Activated CD4-positive, alpha-beta T cell treated with anti-CD3 and anti-CD28 coated beads, Interleukin-2, amount 10 ng/mL, durations not matched to agents 24 days and 14 days (primary cell): ENCODE measurements at regions of chr6 and their contacts with region 1.

Region 1: GRCh38 chr6:166627033-166627874 is at the start of gene RPS6KA2:
- DNase-seq: peak; percentile 100
- H3K4me3 Mint-ChIP-seq: peak within 1 kb of the TSS; percentile 91
- H3K27ac Mint-ChIP-seq: peak within 1 kb of the TSS; percentile 83
- H3K4me1 Mint-ChIP-seq: peaks cover 17% of the 10 kb centered on the region
- H3K27me3 Mint-ChIP-seq: peaks cover 46% of the 10 kb centered on the region
- total RNA-seq, gene RPS6KA2: 2.8 and 3.1 TPM in 2 replicates

Region 2: GRCh38 chr6:166342349-166343149 is 284.7 kb before region 1 on chr6 and contains the start of gene SFT2D1:
- intact Hi-C with region 1: no loop called
- DNase-seq: peak; percentile 96
- H3K4me3 Mint-ChIP-seq: peak within 1 kb of the TSS; percentile 99
- H3K27ac Mint-ChIP-seq: peak within 1 kb of the TSS; percentile 93
- H3K4me1 Mint-ChIP-seq: peaks cover 8% of the 10 kb centered on the region
- H3K27me3 Mint-ChIP-seq: peaks cover 4% of the 10 kb centered on the region
- total RNA-seq, gene SFT2D1: 56.9 and 61.2 TPM in 2 replicates

Region 3: DNA sequence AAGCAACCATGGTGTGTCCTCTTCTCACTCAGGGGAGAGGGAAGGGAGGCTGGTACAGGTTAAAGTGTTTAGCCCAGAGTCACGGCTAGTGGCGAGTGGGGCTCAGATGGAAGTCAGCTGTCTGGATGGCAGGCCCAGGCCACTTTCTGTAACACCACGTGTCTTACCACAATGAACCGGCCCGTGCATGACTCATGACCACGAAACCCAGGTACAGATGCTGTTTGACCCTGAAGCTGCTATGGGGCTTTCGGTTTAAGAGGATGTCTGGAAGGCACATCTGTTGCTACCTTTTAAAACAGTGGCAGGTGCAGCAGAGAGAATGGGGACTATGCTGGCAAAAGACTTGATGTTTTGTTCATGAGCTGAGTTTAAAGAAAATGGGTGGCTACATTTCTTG is 208.0 kb before region 1 on chr6:
- intact Hi-C with region 1: loop called (anchors 5 kb)
- DNase-seq: peak; percentile 86
- H3K4me3 Mint-ChIP-seq: peak overlapping the region; percentile 9
- H3K27ac Mint-ChIP-seq: peak overlapping the region; percentile 50
- H3K4me1 Mint-ChIP-seq: peaks cover 61% of the 10 kb centered on the region
- H3K27me3 Mint-ChIP-seq: no peaks in the 10 kb centered on the region

Region 4: DNA sequence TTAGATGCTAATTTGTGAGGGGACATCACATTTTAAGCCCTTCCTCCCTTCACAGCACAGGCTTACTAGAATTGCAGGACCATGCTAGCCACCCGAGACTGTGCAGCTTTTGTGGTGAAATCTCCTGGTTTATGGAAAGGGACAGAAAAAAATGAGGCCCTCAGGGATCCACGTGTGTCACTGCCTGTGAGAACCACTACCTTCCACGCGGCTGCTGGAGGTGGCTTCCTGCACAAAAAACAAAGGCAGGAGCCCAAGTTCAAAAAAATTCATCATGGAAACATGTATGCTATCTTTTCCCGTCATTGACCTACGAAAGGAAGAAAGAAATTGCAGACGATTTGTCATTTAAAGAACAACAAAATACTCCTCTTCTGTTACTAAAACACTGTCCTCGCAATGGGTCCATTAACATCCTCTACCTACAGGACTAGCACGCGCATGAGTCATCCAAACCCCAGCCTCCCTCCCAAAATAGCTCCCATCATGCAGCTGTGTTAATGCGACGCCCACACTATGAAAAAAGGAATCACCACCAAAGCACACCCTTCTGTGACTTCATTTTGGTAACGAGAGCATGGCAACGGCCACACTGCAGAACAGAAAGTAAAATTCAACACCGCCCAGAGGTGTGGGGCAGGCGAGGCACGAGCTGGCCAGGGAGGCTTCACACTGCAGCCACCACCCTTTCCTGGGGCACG is 86.5 kb before region 1 on chr6:
- intact Hi-C with region 1: loop called (anchors 1 kb)
- DNase-seq: peak; percentile 82
- H3K4me3 Mint-ChIP-seq: peak overlapping the region; percentile 70
- H3K27ac Mint-ChIP-seq: peak overlapping the region; percentile 86
- H3K4me1 Mint-ChIP-seq: peaks cover 23% of the 10 kb centered on the region
- H3K27me3 Mint-ChIP-seq: no peaks in the 10 kb centered on the region

Region 5: DNA sequence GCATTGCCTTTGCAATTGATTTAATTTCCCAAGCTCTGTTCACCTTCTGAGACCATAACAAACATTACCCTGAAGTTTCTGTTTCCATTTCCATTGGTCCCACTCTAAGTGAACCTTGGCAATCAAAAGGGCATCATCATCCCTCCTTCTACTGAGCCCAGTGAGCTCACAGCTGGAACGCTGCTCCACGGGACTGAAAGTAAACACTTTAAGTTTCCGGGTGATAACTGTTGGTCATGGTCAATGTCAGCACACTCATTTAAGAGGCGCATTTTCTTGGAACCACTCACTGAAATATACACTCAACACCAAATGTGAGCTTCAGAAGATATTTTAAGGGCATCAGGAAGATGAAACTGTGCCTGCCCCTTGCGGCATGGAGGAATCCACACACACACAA is 36.9 kb after region 1 on chr6:
- intact Hi-C with region 1: no loop called
- DNase-seq: no peak
- H3K4me3 Mint-ChIP-seq: no peak overlapping the region
- H3K27ac Mint-ChIP-seq: no peak overlapping the region
- H3K4me1 Mint-ChIP-seq: peaks cover 2% of the 10 kb centered on the region
- H3K27me3 Mint-ChIP-seq: peaks cover 2% of the 10 kb centered on the region

Region 6: GRCh38 chr6:166839569-166839968 is 212.3 kb after region 1 on chr6:
- intact Hi-C with region 1: no loop called
- DNase-seq: no peak
- H3K4me3 Mint-ChIP-seq: no peak overlapping the region
- H3K27ac Mint-ChIP-seq: no peak overlapping the region
- H3K4me1 Mint-ChIP-seq: no peaks in the 10 kb centered on the region
- H3K27me3 Mint-ChIP-seq: peaks cover 5% of the 10 kb centered on the region

Region 7: DNA sequence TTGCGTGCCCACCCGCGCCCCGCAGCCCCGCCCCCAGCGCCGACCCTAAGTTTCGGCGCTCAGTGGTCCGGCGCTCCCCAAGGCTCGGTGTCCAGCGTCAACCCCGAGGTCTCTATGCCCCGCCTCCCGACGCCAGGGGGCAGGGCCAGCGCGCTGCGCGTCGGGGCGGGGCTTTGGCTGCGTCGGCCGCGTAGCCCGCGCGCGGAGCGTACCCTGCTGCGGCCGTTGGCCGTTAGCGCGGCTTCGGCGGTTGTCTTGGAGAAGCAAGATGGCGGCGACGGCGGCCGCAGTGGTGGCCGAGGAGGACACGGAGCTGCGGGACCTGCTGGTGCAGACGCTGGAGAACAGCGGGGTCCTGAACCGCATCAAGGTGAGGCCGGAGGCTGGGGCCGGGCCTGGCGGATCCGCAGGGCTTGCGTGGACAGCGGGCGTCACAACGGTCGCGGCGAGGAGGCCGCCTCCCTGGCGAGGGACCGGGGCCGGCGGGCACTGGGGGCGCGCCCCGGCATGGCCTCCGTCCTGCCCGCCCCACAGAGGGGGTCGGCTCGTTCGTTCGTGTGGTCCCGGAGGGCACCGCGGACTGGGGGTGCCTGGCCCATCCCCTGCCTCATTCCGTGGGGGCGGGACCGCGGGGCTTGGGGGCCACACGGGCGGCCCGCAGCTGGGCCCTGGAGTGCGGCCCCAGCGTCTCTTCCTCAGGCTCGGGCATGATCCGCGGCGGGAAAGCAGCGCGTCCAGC is 372.1 kb after region 1 on chr6 and contains the start of gene CEP43:
- intact Hi-C with region 1: loop called (anchors 1 kb)
- DNase-seq: peak; percentile 97
- H3K4me3 Mint-ChIP-seq: peak within 1 kb of the TSS; percentile 75
- H3K27ac Mint-ChIP-seq: peak within 1 kb of the TSS; percentile 85
- H3K4me1 Mint-ChIP-seq: peaks cover 33% of the 10 kb centered on the region
- H3K27me3 Mint-ChIP-seq: no peaks in the 10 kb centered on the region
- total RNA-seq, gene CEP43: 21.1 and 23.0 TPM in 2 replicates

Region 8: GRCh38 chr6:167826230-167826895 is 1199.1 kb after region 1 on chr6:
- intact Hi-C with region 1: loop called (anchors 5 kb)
- DNase-seq: peak; percentile 91
- H3K4me3 Mint-ChIP-seq: peak overlapping the region; percentile 89
- H3K27ac Mint-ChIP-seq: peak overlapping the region; percentile 76
- H3K4me1 Mint-ChIP-seq: peaks cover 31% of the 10 kb centered on the region
- H3K27me3 Mint-ChIP-seq: peaks cover 70% of the 10 kb centered on the region